Psoas muscle (tissue), 8 donors: ENCODE measurements at regions of chr1 and their contacts with region 1.

Region 1: DNA sequence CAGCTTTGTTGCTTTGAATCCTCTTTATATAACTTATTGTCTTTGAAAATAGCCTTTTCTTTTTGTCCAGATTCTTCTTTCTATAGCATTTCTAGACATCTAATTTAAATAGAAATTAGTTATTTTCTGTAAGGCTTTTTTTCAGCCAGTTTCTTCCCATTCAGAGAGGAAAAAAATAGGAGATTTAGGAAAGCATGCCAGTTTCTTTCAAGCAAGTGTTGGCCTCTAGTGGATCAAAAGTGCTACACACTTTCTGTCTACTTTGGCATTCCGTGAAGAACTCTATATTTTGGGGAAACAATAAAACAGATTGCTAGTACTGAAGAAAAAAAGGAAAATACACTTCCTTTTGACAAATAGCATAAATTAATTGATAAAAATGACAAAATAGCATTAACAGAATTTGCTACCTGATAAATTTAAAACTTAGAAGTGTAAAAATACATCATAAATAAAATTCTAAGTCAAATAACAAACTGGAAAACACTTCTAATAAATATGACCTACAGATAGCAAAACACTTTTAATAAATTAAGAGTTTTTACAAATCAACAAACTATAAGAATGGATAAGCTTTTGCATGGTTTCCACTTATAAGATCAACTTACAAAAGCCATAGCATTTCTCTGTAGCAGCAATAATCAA is 13.1 kb upstream of the EXO1 start:
- DNase-seq: no peak
- ATAC-seq: no peak
- H3K4me3 ChIP-seq: no peak overlapping the region
- H3K27ac ChIP-seq: no peak overlapping the region
- H3K4me1 ChIP-seq: no peaks in the 10 kb centered on the region
- H3K27me3 ChIP-seq: no peaks in the 10 kb centered on the region
- CTCF ChIP-seq: peak; percentile 34

Region 2: GRCh38 chr1:241605146-241605805 is 229.6 kb before region 1 on chr1:
- intact Hi-C with region 1: loop called in 1 of 2 experiments (anchors 5 kb)
- DNase-seq: no peak
- ATAC-seq: no peak
- H3K4me3 ChIP-seq: no peak overlapping the region
- H3K27ac ChIP-seq: no peak overlapping the region
- H3K4me1 ChIP-seq: no peaks in the 10 kb centered on the region
- H3K27me3 ChIP-seq: no peaks in the 10 kb centered on the region
- CTCF ChIP-seq: no peak